ENCODE measurements at regions of chr2 and their contacts with region 1.

Region 1: DNA sequence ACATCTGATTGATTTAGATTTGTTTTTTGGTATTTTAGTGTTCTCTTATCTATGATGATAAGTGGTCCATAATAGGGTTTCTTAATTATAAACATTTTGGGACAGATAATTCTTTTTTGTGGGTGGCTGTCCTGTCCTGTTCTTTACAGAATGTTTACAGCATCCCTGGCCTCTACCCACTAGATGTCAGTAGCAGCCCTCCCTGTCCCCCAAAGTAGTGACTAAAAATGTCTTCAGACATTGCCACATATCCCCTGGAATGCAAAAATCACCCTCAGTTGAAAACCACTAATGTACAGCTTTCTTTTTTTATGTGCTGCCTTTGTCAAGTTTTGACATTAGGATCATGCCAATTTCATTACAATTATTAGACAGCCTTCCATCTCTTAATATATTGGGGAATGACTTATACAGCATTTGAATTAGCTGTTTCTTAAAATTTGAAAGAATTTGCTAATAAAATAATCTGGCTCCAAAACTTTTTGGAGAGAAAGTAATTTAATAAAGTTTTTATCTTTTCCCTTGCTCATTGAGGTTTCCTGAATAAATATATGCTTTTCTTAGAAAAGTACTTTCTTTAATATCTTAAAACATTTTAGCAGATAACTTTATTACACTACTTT is 19.5 kb downstream of the WIPF1 start:
- DNase-seq: peak in 1 of 2 experiments; percentile 50
- ATAC-seq: peak; percentile 70 to 84; a peak in 4 of 6 replicates
- H3K4me3 ChIP-seq: no peak overlapping the region
- H3K27ac ChIP-seq: no peak overlapping the region
- H3K4me1 ChIP-seq: no peaks in the 10 kb centered on the region
- CTCF ChIP-seq: peak; percentile 71
- EP300 ChIP-seq: no peak
- POLR2A ChIP-seq: no peak
- RAD21 ChIP-seq: peak; percentile 80 to 91

Region 2: GRCh38 chr2:174606336-174606735 is 28.3 kb after region 1 on chr2:
- CTCF ChIA-PET with region 1: no interaction called
- POLR2A ChIA-PET with region 1: no interaction called
- DNase-seq: peak; percentile 56 to 82
- ATAC-seq: peak; percentile 91
- H3K4me3 ChIP-seq: no peak overlapping the region
- H3K27ac ChIP-seq: peak overlapping the region; percentile 72 to 81
- H3K4me1 ChIP-seq: peaks cover 47% of the 10 kb centered on the region
- CTCF ChIP-seq: no peak
- EP300 ChIP-seq: peak in 1 of 2 experiments; percentile 25; a peak in 1 of 5 replicates
- POLR2A ChIP-seq: no peak
- RAD21 ChIP-seq: no peak

Region 3: DNA sequence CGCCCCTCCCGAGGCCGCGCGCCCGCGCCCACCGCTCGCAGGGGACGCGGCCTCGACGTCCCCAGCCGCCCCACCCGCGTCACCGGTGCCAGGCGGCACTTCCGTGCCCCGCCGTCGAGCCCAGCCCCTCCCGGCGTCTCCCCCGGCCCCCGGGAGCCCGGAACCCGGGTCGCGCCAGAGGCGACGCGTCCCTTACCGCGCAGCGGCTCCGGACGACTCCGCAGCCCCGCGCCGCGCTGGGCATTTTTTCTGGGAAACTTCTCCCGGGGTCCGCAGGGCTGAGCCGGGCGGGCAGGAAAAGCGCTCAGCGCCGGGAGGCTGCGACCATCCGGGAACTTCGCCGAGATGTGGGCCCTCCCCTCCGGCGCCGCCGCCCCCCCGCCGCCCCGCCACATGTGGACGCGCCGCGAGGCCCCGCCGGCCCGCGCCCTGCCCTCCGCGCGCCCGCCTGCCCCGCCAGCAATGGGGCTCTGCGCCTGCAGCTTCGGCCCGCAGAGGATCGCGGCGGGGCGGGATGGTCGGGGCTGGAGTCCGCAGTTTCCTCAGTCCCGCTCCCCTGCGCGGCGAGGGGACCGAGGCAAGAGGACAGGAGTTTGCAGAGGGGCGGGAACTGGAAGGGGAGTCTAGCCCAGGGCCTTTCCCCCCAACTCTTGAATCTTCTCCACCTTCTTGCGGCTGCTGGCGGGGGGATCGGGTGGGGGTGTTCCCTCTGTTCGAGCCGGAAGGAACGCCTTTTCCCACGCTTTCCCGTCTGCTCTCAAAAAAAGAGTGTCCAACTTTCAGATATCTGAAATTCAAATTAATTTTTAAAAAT is 104.7 kb after region 1 on chr2:
- CTCF ChIA-PET with region 1: interaction called, 73 read pairs
- POLR2A ChIA-PET with region 1: no interaction called
- DNase-seq: peak; percentile 55 to 64
- ATAC-seq: peak; percentile 73 to 76
- H3K4me3 ChIP-seq: peak overlapping the region; percentile 98
- H3K27ac ChIP-seq: peak overlapping the region; percentile 97 to 98
- H3K4me1 ChIP-seq: peaks cover 22% of the 10 kb centered on the region; the same call in 2 of the 3 replicates
- CTCF ChIP-seq: no peak
- EP300 ChIP-seq: no peak
- POLR2A ChIP-seq: no peak; the same call in 1 of the 2 replicates
- RAD21 ChIP-seq: no peak

Measured in A549 (cell line).